ENCODE measurements at regions of chr3 and their contacts with region 1.

Region 1: DNA sequence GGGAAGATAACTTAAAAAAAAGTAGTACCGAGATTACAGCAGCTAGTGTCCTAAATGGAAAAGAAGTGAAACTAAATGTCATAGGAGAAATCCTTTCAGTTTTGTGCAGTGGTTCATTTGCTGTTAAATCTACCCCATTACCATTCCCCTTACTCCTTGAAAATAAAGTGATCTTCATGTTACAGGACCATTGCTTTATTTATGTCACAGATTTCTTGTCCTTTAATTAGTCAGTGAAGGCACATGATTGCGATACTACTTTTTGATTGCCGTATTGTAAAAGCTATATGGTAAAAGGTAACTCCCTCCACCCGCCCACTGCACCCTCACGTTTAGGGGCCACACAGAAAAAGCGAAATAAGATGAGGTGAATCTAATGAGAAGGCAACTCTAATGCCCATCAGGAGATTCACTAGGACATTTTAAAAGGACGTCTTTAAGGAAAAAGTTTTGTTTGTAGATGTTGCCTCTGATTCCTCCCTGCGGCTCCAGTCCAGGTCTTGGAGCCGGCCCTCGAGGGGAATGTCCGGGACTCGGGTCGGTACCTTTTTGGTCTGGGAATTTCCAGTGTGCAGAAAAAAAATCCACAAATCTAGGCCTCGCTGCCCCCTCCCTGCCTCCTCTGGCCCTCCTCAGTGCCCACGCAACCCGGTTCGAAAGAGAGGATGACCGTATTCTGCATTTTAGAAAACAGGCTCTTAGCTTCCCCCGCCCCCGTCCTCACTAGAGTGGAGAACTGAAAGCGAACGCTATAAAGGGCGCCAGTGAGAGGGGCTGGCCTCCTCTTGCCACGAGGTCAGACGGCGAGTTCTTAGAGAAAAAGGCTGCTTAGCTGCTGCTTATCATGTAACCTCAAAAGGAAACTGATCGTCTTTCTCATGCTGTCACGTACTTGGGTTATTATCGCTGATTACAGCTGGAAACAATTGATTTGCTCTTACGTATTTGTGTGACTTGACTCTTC is 21.8 kb upstream of the NFKBIZ start:
- DNase-seq: peak; percentile 90

Region 2: GRCh38 chr3:101842245-101842934 is 14.9 kb after region 1 on chr3:
- intact Hi-C with region 1: no loop called
- DNase-seq: no peak

Region 3: DNA sequence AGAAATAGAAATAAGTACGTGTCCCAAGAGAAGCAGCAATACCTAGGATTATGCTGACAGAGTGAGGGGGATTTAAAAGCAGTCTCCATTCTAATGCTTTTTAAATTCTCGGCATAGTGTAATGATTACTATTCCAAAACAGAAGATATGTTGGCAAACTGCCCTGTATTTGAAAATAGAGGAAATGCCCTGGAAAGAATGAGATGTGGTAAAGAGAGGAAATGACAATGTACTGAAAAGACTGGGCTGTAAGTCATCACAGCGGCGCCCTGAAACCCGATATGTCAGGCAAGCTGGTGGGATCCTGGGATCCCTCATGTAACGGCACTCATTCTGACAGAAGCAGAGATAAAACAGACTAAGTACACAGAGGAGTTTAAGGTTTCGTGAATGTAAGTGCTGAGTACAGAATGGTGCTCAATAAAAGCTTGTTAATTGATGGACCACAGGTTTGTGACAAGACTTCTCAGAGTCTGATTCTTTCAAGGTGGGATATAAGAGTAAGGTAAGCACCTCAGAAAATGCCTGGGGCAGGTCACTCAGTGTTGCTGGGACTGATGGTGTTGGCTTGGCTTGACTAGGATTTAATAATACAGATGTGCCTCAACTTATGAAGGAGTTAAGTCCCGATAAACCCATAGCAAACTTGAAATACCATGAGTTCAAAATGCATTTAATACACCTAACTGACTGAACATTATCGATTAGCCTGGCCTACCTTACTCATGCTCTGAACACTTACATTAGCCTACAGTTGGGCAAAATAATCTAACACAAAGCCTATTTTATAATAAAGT is 113.2 kb after region 1 on chr3:
- intact Hi-C with region 1: loop called (anchors 2 kb)
- DNase-seq: peak; percentile 80